PC-9 (cell line): ENCODE measurements at regions of chr10 and their contacts with region 1.

Region 1: GRCh38 chr10:133378251-133379096 is 588 bp upstream of the PAOX start:
- DNase-seq: peak in 1 of 2 experiments; percentile 37
- H3K4me3 ChIP-seq: peak overlapping the region; percentile 64
- H3K27ac ChIP-seq: no peak overlapping the region
- H3K4me1 ChIP-seq: no peaks in the 10 kb centered on the region
- H3K27me3 ChIP-seq: no peaks in the 10 kb centered on the region
- CTCF ChIP-seq: no peak

Region 2: DNA sequence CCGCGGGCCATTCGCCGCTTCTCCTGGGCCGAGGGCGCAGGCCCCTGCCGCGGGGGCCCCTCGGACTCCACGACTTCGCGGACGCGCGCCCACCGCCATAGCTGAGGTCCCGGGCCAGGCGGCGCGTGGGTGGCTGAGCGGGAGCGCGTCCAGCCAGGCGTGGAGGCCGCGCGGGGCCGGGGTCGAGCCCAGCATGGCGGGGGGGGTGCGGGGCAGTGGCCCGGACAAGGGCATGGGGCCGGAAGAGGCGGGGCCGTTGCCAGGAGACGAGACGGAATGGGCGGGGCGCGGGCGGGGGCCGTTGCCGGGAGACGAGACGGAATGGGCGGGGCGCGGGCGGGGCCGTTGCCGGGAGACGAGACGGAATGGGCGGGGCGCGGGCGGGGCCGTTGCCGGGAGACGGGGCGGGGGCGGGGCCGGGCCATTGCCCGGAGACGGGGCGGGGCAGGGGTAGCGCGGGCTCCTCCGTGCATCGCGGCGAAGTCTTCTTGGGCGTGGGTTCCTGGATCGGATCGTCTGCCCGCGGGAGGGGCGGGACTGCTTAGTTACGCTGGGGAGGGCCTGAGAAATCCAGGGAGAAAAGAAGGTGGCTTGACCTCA is 116.6 kb before region 1 on chr10:
- CTCF ChIA-PET with region 1: interaction called, 11 read pairs
- POLR2A ChIA-PET with region 1: no interaction called
- intact Hi-C with region 1: no loop called
- DNase-seq: peak in 1 of 2 experiments; percentile 64
- H3K4me3 ChIP-seq: peak overlapping the region; percentile 55
- H3K27ac ChIP-seq: no peak overlapping the region
- H3K4me1 ChIP-seq: peaks cover 41% of the 10 kb centered on the region
- H3K27me3 ChIP-seq: no peaks in the 10 kb centered on the region
- CTCF ChIP-seq: no peak

Region 3: DNA sequence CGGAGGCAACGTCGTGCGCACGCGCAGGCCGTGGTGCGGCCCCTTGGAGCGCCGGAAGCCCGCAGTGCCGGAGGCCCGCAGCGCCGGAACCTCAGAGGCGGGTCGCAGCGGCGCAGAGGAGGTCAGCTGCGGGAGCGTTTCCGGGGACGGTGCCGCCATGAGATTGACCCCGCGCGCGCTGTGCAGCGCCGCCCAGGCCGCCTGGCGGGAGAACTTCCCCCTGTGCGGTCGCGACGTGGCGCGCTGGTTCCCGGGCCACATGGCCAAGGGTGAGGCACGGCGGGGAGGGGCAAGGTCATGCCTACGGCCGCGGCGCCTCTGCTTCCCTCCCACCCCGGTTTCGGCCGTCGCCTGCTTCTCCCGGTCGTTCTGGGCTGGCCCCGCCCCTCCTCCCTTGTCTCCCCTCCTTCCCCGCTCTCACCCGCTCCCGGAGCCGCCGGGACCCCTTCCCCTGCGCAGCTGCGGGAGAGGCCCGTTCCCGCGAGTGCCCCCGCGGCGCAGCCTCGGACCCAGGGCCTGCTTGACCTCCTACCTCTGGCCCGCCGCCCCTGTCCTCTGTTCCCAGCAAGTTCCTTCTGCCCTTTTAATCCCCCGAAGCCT is 15.7 kb after region 1 on chr10 and contains the start of gene MTG1:
- CTCF ChIA-PET with region 1: no interaction called
- POLR2A ChIA-PET with region 1: no interaction called
- intact Hi-C with region 1: loop called (anchors 2 kb)
- DNase-seq: peak; percentile 70 to 91
- H3K4me3 ChIP-seq: peak within 1 kb of the TSS; percentile 97
- H3K27ac ChIP-seq: peak within 1 kb of the TSS; percentile 84
- H3K4me1 ChIP-seq: peaks cover 7% of the 10 kb centered on the region; the same call in 1 of the 2 replicates
- H3K27me3 ChIP-seq: no peaks in the 10 kb centered on the region
- CTCF ChIP-seq: no peak
- total RNA-seq, gene MTG1: 33.0 and 45.9 TPM in 2 replicates